CD4-positive, alpha-beta memory T cell (primary cell): ENCODE measurements at regions of chr19 and their contacts with region 1.

Region 1: GRCh38 chr19:1406774-1407499 is 449 bp upstream of the DAZAP1 start:
- DNase-seq: peak; percentile 98 to 100 (median 100)
- H3K4me3 ChIP-seq: peak overlapping the region; percentile 33 to 57
- H3K4me3 Mint-ChIP-seq: peak overlapping the region; percentile 73 to 87 (median 82)
- H3K27ac ChIP-seq: peak overlapping the region; percentile 88
- H3K27ac Mint-ChIP-seq: peak overlapping the region; percentile 67 to 86 (median 84)
- H3K4me1 ChIP-seq: peaks cover 43% of the 10 kb centered on the region
- H3K4me1 Mint-ChIP-seq: peaks cover 20 to 48% (median 37%) of the 10 kb centered on the region in 4 donors
- H3K27me3 ChIP-seq: no peaks in the 10 kb centered on the region
- H3K27me3 Mint-ChIP-seq: no peaks in the 10 kb centered on the region

Region 2: GRCh38 chr19:1355568-1356507 is 51.1 kb before region 1 on chr19:
- CTCF ChIA-PET with region 1: no interaction called
- POLR2A ChIA-PET with region 1: no interaction called
- intact Hi-C with region 1: loop called (anchors 2 kb)
- DNase-seq: no peak
- H3K4me3 ChIP-seq: peak overlapping the region; percentile 28 to 50
- H3K4me3 Mint-ChIP-seq: peak overlapping the region; percentile 68 to 93 (median 89)
- H3K27ac ChIP-seq: peak overlapping the region; percentile 36
- H3K27ac Mint-ChIP-seq: peak overlapping the region; percentile 47 to 85 (median 78)
- H3K4me1 ChIP-seq: peaks cover 16% of the 10 kb centered on the region
- H3K4me1 Mint-ChIP-seq: peaks cover 8 to 32% (median 14%) of the 10 kb centered on the region in 4 donors
- H3K27me3 ChIP-seq: no peaks in the 10 kb centered on the region
- H3K27me3 Mint-ChIP-seq: no peaks in the 10 kb centered on the region

Region 3: DNA sequence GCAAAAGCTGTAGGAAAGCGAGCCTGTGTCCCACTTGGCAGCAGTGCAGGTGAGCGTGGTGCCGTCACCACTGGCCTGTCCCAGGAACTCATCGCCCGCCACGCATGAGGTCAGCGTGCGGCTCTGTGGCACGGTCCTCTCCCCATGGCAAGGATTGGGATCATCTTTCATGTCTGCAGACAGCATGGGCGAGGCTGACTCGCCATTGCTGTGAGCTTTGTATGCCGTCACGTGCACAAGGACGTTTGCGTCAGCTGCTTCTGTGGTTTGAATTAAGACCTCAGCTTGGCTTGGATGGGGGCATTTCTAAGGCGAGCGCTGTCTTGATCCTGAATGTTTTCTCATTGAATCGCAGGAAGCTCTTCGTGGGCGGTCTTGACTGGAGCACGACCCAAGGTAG is 10.2 kb after region 1 on chr19:
- CTCF ChIA-PET with region 1: no interaction called
- POLR2A ChIA-PET with region 1: interaction called, 10 read pairs
- intact Hi-C with region 1: no loop called
- DNase-seq: no peak
- H3K4me3 ChIP-seq: no peak overlapping the region
- H3K4me3 Mint-ChIP-seq: no peak overlapping the region
- H3K27ac ChIP-seq: no peak overlapping the region
- H3K27ac Mint-ChIP-seq: peak overlapping the region in 3 of 7 donors; percentile 4 to 59 (median 51)
- H3K4me1 ChIP-seq: peaks cover 51% of the 10 kb centered on the region
- H3K4me1 Mint-ChIP-seq: peaks cover 23 to 54% (median 43%) of the 10 kb centered on the region in 4 donors
- H3K27me3 ChIP-seq: no peaks in the 10 kb centered on the region
- H3K27me3 Mint-ChIP-seq: no peaks in the 10 kb centered on the region

Region 4: DNA sequence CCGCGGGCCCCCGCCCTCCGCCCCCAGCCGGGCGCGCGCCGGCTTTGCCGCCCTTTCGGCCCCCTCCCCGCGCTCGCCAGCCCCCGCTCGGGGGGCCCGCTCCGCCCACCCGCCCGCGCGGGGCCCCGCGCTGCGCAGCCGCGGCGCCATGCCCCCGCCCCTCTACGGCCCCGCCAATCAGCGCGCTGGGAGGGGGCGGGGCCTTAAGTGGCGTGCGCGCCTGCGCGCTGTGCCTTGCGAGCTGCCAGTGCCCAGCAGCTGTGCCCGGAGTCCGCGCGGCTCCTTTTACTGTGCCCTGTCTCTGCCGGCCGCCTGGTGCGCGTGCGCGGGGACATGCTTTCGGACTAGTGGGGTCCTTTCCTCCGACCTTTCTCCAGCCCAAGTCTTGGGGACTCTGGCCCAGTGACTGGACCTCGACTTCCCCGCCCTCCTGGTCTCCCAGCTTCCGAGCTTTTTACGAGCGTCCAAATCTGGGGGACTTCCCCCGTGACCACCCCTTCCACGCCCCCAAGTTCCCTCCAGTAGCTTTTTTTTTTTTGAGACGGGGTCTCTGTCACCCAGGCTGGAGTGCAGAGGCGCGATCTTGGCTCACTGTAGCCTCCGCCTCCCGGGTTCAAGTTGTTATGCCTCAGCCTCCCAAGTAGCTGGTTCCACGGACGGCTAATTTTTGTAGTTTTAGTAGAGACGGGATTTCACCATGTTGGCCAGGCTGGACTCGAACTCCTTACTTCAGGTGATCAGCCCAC is 186.0 kb after region 1 on chr19 and contains the start of gene MBD3:
- CTCF ChIA-PET with region 1: no interaction called
- POLR2A ChIA-PET with region 1: interaction called, 3 read pairs
- intact Hi-C with region 1: loop called (anchors 1 kb)
- DNase-seq: peak; percentile 83 to 90 (median 88)
- H3K4me3 ChIP-seq: peak within 1 kb of the TSS; percentile 30 to 86
- H3K4me3 Mint-ChIP-seq: peak within 1 kb of the TSS; percentile 87 to 93 (median 89)
- H3K27ac ChIP-seq: peak within 1 kb of the TSS; percentile 88
- H3K27ac Mint-ChIP-seq: peak within 1 kb of the TSS; percentile 90 to 96 (median 92)
- H3K4me1 ChIP-seq: peaks cover 24% of the 10 kb centered on the region
- H3K4me1 Mint-ChIP-seq: peaks cover 9 to 26% (median 15%) of the 10 kb centered on the region in 4 donors
- H3K27me3 ChIP-seq: no peaks in the 10 kb centered on the region
- H3K27me3 Mint-ChIP-seq: no peaks in the 10 kb centered on the region
- total RNA-seq, gene MBD3: 56.9 to 62.8 TPM